B cell (primary cell): ENCODE measurements at regions of chr11 and their contacts with region 1.

Region 1: DNA sequence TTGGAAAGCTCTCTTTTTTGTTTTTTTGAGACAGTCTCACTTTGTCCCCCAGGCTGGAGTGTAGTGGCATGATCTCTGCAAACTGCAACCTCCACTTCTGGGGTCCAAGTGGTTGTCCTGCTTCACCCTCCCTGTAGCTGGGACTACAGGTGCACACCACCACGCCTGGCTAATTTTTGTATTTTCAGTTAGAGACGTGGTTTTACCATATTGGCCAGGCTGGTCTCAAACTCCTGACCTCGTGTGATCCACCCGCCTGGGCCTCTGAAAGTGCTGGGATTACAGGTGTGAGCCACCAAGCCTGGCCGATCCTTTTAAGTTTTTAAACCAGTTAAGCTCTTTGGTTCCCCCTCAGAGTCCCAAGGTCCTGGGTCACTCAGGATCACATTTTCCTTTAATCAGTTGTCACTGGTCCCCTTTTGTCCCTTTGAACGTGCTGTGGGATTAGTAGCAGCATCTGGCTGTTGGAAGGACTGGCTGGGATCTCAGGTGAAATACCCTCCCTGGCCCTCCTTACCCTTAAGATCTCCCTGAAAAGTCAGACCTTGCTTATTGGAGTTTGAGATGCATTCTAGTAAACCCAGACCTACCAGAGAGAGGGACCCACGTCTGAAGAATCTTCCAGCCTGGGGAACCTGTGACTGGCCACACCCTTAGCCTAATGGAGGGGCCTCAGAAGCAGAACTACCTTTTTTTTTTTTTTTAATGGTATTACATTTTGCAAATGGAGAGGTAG is 8.1 kb downstream of the MALAT1 start:
- DNase-seq: peak; percentile 79
- ATAC-seq: peak; percentile 61
- H3K4me3 ChIP-seq: peak overlapping the region in 1 of 5 experiments; percentile 99
- H3K4me3 Mint-ChIP-seq: no peak overlapping the region
- H3K27ac ChIP-seq: peak overlapping the region; percentile 65 to 99
- H3K27ac Mint-ChIP-seq: peak overlapping the region; percentile 78
- H3K4me1 ChIP-seq: peaks cover 45 to 56% of the 10 kb centered on the region in 2 donors
- H3K4me1 Mint-ChIP-seq: peaks cover 56% of the 10 kb centered on the region
- H3K27me3 ChIP-seq: no peaks in the 10 kb centered on the region
- H3K27me3 Mint-ChIP-seq: no peaks in the 10 kb centered on the region
- CTCF ChIP-seq: no peak

Region 2: GRCh38 chr11:65354265-65355012 is 152.5 kb before region 1 on chr11 and contains the start of gene TIGD3:
- CTCF ChIA-PET with region 1: interaction called, 9 read pairs
- POLR2A ChIA-PET with region 1: interaction called, 10 read pairs
- intact Hi-C with region 1: no loop called
- DNase-seq: peak; percentile 97
- ATAC-seq: peak; percentile 96
- H3K4me3 ChIP-seq: peak within 1 kb of the TSS; percentile 26 to 79 (median 65)
- H3K4me3 Mint-ChIP-seq: peak within 1 kb of the TSS; percentile 95
- H3K27ac ChIP-seq: peak within 1 kb of the TSS in 1 of 2 donors; percentile 18
- H3K27ac Mint-ChIP-seq: peak within 1 kb of the TSS; percentile 92
- H3K4me1 ChIP-seq: peaks cover 11 to 16% of the 10 kb centered on the region in 2 donors
- H3K4me1 Mint-ChIP-seq: peaks cover 20% of the 10 kb centered on the region
- H3K27me3 ChIP-seq: no peaks in the 10 kb centered on the region
- H3K27me3 Mint-ChIP-seq: no peaks in the 10 kb centered on the region
- CTCF ChIP-seq: no peak
- total RNA-seq, gene TIGD3: 6.1 and 7.5 TPM in 2 replicates

Region 3: DNA sequence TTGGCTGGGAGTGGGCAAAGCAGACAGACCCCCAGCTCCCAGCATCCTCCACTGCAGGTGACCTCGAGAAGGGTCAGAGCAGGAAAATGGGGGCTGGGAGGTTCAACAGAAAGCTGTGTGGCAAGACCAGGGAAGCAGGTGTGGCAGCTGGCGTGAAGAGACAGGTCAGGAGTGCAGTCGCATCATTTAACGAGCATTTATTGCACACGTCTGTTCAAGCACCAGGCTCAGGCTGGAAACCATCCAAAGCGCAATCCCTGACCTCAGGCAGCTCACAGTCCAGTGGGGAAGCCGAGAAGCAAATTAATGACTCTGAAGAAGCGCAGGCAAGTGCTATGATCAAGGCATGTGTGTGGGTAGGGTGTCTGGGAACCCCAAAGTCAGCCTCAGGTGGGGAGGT is 131.9 kb before region 1 on chr11:
- CTCF ChIA-PET with region 1: interaction called, 252 read pairs
- POLR2A ChIA-PET with region 1: interaction called, 56 read pairs
- intact Hi-C with region 1: no loop called
- DNase-seq: no peak
- ATAC-seq: no peak
- H3K4me3 ChIP-seq: no peak overlapping the region
- H3K4me3 Mint-ChIP-seq: no peak overlapping the region
- H3K27ac ChIP-seq: no peak overlapping the region
- H3K27ac Mint-ChIP-seq: peak overlapping the region; percentile 46
- H3K4me1 ChIP-seq: peaks cover 17 to 27% of the 10 kb centered on the region in 2 donors
- H3K4me1 Mint-ChIP-seq: peaks cover 19% of the 10 kb centered on the region
- H3K27me3 ChIP-seq: no peaks in the 10 kb centered on the region
- H3K27me3 Mint-ChIP-seq: no peaks in the 10 kb centered on the region
- CTCF ChIP-seq: no peak

Region 4: GRCh38 chr11:65391007-65391406 is 115.9 kb before region 1 on chr11:
- CTCF ChIA-PET with region 1: interaction called, 252 read pairs
- POLR2A ChIA-PET with region 1: interaction called, 17 read pairs
- intact Hi-C with region 1: no loop called
- DNase-seq: no peak
- ATAC-seq: no peak
- H3K4me3 ChIP-seq: no peak overlapping the region
- H3K4me3 Mint-ChIP-seq: no peak overlapping the region
- H3K27ac ChIP-seq: no peak overlapping the region
- H3K27ac Mint-ChIP-seq: peak overlapping the region; percentile 46
- H3K4me1 ChIP-seq: peaks cover 44 to 57% of the 10 kb centered on the region in 2 donors
- H3K4me1 Mint-ChIP-seq: peaks cover 49% of the 10 kb centered on the region
- H3K27me3 ChIP-seq: no peaks in the 10 kb centered on the region
- H3K27me3 Mint-ChIP-seq: no peaks in the 10 kb centered on the region
- CTCF ChIP-seq: no peak

Region 5: DNA sequence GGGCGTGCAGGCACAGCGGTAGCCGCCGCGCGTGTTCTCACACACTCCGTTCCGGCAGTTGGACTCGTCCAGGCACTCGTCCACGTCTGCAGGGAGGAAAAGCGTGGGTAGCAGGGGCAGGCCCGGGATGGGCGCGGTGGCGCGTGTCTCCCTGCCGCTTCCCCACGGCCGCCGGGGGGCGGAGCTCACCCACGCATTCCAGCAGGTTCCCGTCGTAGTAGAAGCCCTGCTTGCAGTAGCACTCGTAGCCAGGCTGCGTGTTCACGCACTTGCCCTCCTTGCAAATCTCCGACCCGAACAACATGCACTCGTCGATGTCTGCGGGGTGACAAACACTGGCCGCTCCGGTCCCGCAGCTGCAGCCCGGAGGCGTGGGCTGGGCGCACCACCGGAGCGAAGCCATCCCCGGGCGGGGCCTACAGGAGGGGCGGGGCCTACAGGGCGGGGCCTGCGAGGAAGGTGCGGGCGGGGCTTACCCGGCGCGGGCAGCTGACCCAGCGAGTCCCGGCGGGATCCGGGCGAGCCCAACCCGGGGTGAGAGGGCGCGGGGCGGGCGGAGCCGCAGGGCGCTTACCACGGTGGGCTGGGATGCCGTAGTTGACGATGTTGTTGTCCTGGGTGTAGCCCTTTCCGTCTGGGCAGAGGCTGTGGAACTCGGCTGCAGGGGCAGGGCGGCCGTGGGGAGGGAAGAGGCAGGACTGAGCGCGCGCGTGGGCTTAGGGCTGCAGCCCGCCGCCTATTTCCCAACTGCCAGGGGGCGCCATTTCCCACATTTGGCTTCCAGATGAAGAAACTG is 33.6 kb after region 1 on chr11:
- CTCF ChIA-PET with region 1: interaction called, 16 read pairs
- POLR2A ChIA-PET with region 1: interaction called, 4 read pairs
- intact Hi-C with region 1: no loop called
- DNase-seq: peak; percentile 97
- ATAC-seq: peak; percentile 87
- H3K4me3 ChIP-seq: peak overlapping the region; percentile 74 to 97 (median 86)
- H3K4me3 Mint-ChIP-seq: peak overlapping the region; percentile 95
- H3K27ac ChIP-seq: peak overlapping the region; percentile 85 to 87
- H3K27ac Mint-ChIP-seq: peak overlapping the region; percentile 96
- H3K4me1 ChIP-seq: peaks cover 12 to 17% of the 10 kb centered on the region in 2 donors
- H3K4me1 Mint-ChIP-seq: peaks cover 24% of the 10 kb centered on the region
- H3K27me3 ChIP-seq: no peaks in the 10 kb centered on the region
- H3K27me3 Mint-ChIP-seq: no peaks in the 10 kb centered on the region
- CTCF ChIP-seq: peak; percentile 63

Region 6: DNA sequence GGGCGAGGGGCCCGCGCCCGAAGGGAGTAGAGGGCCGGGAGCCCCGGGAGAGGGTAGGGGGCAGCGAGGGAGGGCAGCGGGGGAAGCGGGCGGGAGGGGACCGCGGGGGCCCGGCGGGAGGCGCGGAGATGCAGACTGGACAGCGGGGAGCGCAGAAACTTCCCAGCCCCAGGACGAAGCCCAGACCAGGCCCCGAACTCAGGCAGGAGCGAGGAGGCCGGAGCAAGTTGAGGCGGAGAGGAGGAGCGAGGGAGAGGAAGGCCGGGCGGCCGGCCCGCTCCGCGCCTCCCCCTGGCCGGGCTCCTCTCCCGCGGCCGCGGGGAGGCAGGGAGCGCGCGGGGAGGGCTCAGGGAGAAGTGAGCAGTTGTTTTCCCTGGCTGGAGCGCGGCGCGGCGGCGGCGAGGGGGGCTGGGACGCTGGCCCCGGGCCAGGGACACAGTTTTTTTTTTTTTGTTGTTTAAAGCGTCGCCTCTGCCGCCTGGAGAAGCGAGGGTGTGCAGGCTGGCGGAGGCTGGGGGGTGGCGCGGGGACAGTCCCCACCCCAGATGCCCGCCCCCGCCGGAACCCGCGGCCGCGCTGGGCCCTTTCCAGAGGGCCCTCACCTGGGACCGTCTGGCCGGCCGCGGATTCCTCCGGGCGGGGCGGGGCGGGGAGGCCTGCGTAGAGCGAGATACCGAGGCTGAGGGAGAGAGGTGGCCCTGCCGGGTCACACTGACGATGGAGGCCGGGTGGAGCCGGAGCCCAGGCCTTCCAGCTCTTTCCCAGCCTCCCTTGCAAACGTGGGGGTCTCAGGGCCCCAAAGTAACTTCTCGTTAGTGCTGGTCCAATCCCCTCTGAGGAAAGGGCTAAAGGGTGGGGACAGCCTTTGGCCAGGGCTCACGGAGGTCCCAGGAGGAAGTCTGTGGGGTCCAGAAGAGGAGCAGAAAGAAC is 51.3 kb after region 1 on chr11 and contains the start of gene LTBP3:
- CTCF ChIA-PET with region 1: no interaction called
- POLR2A ChIA-PET with region 1: no interaction called
- intact Hi-C with region 1: no loop called
- DNase-seq: peak; percentile 52
- ATAC-seq: peak; percentile 60
- H3K4me3 ChIP-seq: peak within 1 kb of the TSS; percentile 22 to 62 (median 54)
- H3K4me3 Mint-ChIP-seq: peak within 1 kb of the TSS; percentile 81
- H3K27ac ChIP-seq: peak within 1 kb of the TSS; percentile 57 to 62
- H3K27ac Mint-ChIP-seq: peak within 1 kb of the TSS; percentile 68
- H3K4me1 ChIP-seq: peaks cover 11 to 33% of the 10 kb centered on the region in 2 donors
- H3K4me1 Mint-ChIP-seq: peaks cover 28% of the 10 kb centered on the region
- H3K27me3 ChIP-seq: no peaks in the 10 kb centered on the region
- H3K27me3 Mint-ChIP-seq: peaks cover 3% of the 10 kb centered on the region
- CTCF ChIP-seq: no peak
- total RNA-seq, gene LTBP3: 69.0 and 69.7 TPM in 2 replicates